Activated T-helper 2 cell treated with anti-CD3 and anti-CD28 coated beads, Interferon-gamma antibody, Interleukin-2, Interleukin-4, amounts not matched to agents 10 μg/mL and 5 μg/mL and 100 μg/mL, durations not matched to agents 14 hours and 24 hours and 36 hours (primary cell): ENCODE measurements at regions of chr11 and their contacts with region 1.

Region 1: DNA sequence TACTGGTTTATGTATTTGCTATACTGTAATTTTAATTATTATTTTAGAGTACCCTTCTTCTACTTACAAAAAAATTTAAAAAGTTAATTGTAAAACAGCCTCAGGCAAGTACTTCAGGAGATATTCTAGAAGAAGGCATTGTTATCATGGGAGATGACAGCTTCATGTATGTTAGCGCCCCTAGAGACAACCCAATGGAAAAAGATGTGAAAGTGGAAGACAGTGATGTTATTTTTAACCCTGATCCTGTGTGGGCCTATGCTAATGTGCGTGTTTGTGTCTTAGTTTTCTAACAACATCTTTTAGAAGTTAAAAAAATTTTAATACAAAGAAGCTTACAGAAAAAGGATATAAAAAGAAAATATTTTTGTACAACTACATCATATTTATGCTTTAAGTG is 205.0 kb downstream of the FAM76B start:
- DNase-seq: no peak
- H3K4me3 Mint-ChIP-seq: no peak overlapping the region
- H3K27ac Mint-ChIP-seq: no peak overlapping the region
- H3K4me1 Mint-ChIP-seq: peaks cover 29% of the 10 kb centered on the region
- H3K27me3 Mint-ChIP-seq: no peaks in the 10 kb centered on the region

Region 2: GRCh38 chr11:95345651-95346050 is 238.9 kb before region 1 on chr11:
- intact Hi-C with region 1: loop called (anchors 10 kb)
- DNase-seq: no peak
- H3K4me3 Mint-ChIP-seq: no peak overlapping the region
- H3K27ac Mint-ChIP-seq: peak overlapping the region; percentile 24
- H3K4me1 Mint-ChIP-seq: peaks cover 35% of the 10 kb centered on the region
- H3K27me3 Mint-ChIP-seq: peaks cover 4% of the 10 kb centered on the region

Region 3: DNA sequence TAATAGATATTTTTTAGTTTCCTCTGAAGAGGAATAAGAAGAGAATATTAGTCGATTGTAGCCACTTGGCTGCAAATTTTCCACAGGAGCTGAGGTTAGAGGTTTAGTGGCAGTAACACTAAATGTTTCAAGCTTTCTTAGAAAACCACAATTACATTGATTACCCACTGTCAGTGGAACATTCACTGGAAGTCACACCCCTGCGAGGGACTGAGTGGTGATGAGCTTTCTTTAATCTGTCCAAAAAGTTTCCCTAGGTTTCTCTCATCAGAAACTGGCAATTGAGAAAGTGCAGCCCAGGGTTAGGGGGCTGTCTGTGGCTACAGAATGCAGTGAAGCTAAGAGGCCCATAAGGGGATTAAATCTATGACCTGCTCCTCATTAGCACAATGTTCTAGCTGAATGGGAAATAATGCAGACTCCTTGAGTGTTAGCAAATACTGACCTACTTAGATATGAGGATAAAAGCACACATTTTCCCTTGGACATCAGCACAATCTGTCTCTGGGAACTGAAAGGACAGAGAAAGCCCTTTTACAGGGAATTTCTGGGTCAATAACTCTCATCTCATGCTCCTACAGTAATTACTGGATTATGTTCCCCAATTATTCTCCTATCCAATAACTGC is 15.5 kb after region 1 on chr11:
- intact Hi-C with region 1: loop called (anchors 2 kb)
- DNase-seq: no peak
- H3K4me3 Mint-ChIP-seq: no peak overlapping the region
- H3K27ac Mint-ChIP-seq: peak overlapping the region; percentile 74
- H3K4me1 Mint-ChIP-seq: peaks cover 21% of the 10 kb centered on the region
- H3K27me3 Mint-ChIP-seq: no peaks in the 10 kb centered on the region